PC-3 (cell line): ENCODE measurements at regions of chr12 and their contacts with region 1.

Region 1: GRCh38 chr12:60335745-60336144 is 739.9 kb downstream of the SLC16A7 start:
- DNase-seq: peak; percentile 88
- ATAC-seq: peak; percentile 99
- H3K4me3 ChIP-seq: no peak overlapping the region
- H3K27ac ChIP-seq: no peak overlapping the region
- H3K4me1 ChIP-seq: peaks cover 46% of the 10 kb centered on the region
- H3K27me3 ChIP-seq: no peaks in the 10 kb centered on the region
- CTCF ChIP-seq: no peak

Region 2: GRCh38 chr12:60148109-60148508 is 187.6 kb before region 1 on chr12:
- CTCF ChIA-PET with region 1: no interaction called
- POLR2A ChIA-PET with region 1: no interaction called
- intact Hi-C with region 1: loop called (anchors 10 kb)
- DNase-seq: peak; percentile 84
- ATAC-seq: peak; percentile 82
- H3K4me3 ChIP-seq: no peak overlapping the region
- H3K27ac ChIP-seq: peak overlapping the region; percentile 72
- H3K4me1 ChIP-seq: peaks cover 25% of the 10 kb centered on the region
- H3K27me3 ChIP-seq: no peaks in the 10 kb centered on the region
- CTCF ChIP-seq: no peak

Region 3: DNA sequence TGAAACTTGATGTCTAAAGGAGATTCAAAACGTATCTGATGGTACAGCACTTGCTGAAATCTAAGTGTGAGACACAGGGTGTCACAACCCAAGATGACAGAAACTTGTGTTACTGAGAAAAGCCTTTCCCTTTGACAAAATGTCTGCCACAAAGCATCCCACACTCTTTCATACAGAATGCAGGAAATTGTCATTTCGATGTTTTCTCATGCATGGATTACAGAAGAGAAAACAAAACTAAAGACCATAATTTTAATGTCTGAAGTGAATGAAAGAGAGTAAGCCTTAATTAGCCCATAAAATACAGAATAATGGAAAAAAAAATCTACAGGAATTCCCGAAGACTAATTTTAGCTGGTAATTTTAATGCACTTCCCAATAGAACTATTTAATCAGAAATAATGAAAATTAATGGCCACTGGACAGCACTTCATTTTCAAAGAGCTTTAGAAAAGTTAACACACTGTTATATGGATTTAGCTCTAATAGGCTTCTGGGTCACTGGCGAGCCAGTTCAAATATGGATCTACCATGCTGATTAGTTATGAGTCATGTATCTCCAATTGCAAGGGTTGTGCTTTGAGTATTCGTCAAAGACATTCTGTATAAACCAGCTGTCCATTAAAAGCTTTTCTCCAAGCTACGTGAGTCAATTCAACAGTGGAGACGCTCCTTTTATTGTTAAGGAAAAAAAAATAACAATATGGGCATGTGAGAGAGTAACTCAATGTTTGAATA is 83.2 kb before region 1 on chr12:
- CTCF ChIA-PET with region 1: no interaction called
- POLR2A ChIA-PET with region 1: no interaction called
- intact Hi-C with region 1: no loop called
- DNase-seq: no peak
- ATAC-seq: no peak
- H3K4me3 ChIP-seq: no peak overlapping the region
- H3K27ac ChIP-seq: no peak overlapping the region
- H3K4me1 ChIP-seq: peaks cover 13% of the 10 kb centered on the region
- H3K27me3 ChIP-seq: no peaks in the 10 kb centered on the region
- CTCF ChIP-seq: no peak

Region 4: DNA sequence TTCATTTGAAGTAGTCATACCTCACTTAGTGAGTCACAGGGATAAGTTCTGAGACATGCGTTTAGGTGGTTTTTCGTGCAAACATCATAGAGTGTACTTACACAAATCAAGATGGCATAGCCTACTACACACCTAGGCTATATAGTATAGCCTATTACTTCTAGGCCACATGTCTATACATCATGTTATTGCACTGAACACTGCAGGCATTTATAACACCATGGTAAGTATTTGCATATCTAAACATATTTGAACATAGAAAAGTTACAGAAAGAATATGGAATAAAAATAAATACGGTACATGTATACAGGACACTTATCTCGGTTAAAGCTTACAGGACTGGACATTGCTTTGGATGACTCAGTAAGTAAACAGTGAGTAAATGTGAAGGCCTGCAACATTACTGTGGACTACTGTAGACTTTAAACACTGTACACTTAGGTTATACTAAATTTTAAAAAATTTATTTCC is 69.3 kb before region 1 on chr12:
- CTCF ChIA-PET with region 1: no interaction called
- POLR2A ChIA-PET with region 1: no interaction called
- intact Hi-C with region 1: loop called (anchors 10 kb)
- DNase-seq: peak; percentile 91
- ATAC-seq: peak; percentile 99
- H3K4me3 ChIP-seq: peak overlapping the region; percentile 22; the same call in 1 of the 2 replicates
- H3K27ac ChIP-seq: peak overlapping the region; percentile 84
- H3K4me1 ChIP-seq: peaks cover 48% of the 10 kb centered on the region
- H3K27me3 ChIP-seq: no peaks in the 10 kb centered on the region
- CTCF ChIP-seq: no peak

Region 5: GRCh38 chr12:60290532-60290931 is 45.2 kb before region 1 on chr12:
- CTCF ChIA-PET with region 1: no interaction called
- POLR2A ChIA-PET with region 1: no interaction called
- intact Hi-C with region 1: loop called (anchors 5 kb)
- DNase-seq: no peak
- ATAC-seq: no peak
- H3K4me3 ChIP-seq: no peak overlapping the region
- H3K27ac ChIP-seq: no peak overlapping the region
- H3K4me1 ChIP-seq: peaks cover 9% of the 10 kb centered on the region
- H3K27me3 ChIP-seq: no peaks in the 10 kb centered on the region
- CTCF ChIP-seq: no peak

Region 6: GRCh38 chr12:60308366-60308991 is 27.3 kb before region 1 on chr12:
- CTCF ChIA-PET with region 1: no interaction called
- POLR2A ChIA-PET with region 1: no interaction called
- intact Hi-C with region 1: no loop called
- DNase-seq: peak; percentile 91
- ATAC-seq: peak; percentile 96
- H3K4me3 ChIP-seq: no peak overlapping the region
- H3K27ac ChIP-seq: peak overlapping the region; percentile 77
- H3K4me1 ChIP-seq: peaks cover 30% of the 10 kb centered on the region
- H3K27me3 ChIP-seq: no peaks in the 10 kb centered on the region
- CTCF ChIP-seq: no peak

Region 7: DNA sequence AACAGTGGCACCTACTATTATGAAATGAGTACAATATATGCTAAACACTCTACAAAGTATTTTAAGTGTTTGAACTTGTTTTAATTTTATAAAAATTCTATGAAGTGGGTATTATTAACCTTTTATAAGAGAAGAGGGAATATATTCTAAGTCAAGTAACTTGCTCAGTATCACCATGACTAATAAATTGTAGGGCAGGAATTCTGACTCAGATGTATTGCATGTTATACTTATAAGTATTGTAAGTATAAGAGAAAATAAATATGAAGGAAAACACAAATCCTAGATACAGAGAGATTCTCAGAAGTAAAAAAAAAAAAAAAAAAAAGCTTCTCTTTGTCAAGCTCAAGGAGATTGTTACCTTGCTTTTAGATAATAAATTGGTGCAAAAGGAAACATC is 153.3 kb after region 1 on chr12:
- CTCF ChIA-PET with region 1: no interaction called
- POLR2A ChIA-PET with region 1: no interaction called
- intact Hi-C with region 1: loop called (anchors 10 kb)
- DNase-seq: peak; percentile 55
- ATAC-seq: peak; percentile 46
- H3K4me3 ChIP-seq: no peak overlapping the region
- H3K27ac ChIP-seq: no peak overlapping the region
- H3K4me1 ChIP-seq: peaks cover 11% of the 10 kb centered on the region; the same call in 1 of the 2 replicates
- H3K27me3 ChIP-seq: no peaks in the 10 kb centered on the region
- CTCF ChIP-seq: no peak